Mammary epithelial cell (primary cell): ENCODE measurements at regions of chr13 and their contacts with region 1.

Region 1: GRCh38 chr13:32310134-32310706 is 4.9 kb downstream of the ZAR1L start:
- DNase-seq: peak; percentile 37
- H3K4me3 ChIP-seq: no peak overlapping the region
- H3K27ac ChIP-seq: no peak overlapping the region
- H3K4me1 ChIP-seq: peaks cover 5% of the 10 kb centered on the region
- H3K27me3 ChIP-seq: no peaks in the 10 kb centered on the region
- CTCF ChIP-seq: peak; percentile 56 to 71

Region 2: DNA sequence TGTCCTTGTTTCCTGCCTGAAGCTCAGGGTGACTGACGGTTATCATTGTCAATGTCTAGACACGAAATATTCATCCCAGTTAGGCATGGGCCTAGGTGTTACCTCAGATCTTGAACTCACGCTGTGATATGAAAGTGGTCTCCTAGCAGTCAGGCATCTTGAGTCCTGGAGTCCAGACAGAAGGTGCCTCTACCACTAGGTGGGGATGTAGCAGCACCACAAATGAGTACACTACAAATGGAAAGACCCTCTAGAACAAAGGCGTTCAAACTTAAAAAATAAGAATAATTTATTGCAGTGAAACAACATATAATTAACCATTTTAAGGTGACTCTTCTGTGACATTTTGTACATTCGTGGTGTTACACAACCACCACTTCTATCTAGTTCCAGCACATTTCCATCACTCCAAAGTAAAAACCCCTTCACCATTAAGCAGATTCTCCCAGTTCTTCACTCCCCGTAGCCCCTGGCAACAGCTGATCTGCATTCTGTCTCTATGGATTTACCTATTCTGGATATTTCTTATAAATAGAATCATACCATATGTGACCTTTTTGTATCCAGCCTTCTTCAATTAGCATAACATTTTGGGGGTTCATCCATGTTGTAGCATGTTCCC is 290.5 kb before region 1 on chr13:
- CTCF ChIA-PET with region 1: no interaction called
- dilution Hi-C with region 1: no loop called
- in situ Hi-C with region 1: loop called (anchors 10 to 25 kb)
- intact Hi-C with region 1: loop called (anchors 1 kb)
- DNase-seq: peak; percentile 30
- H3K4me3 ChIP-seq: no peak overlapping the region
- H3K27ac ChIP-seq: no peak overlapping the region
- H3K4me1 ChIP-seq: no peaks in the 10 kb centered on the region
- H3K27me3 ChIP-seq: no peaks in the 10 kb centered on the region
- CTCF ChIP-seq: peak; percentile 47 to 79

Region 3: GRCh38 chr13:32031025-32031814 is 279.0 kb before region 1 on chr13 and contains the start of gene FRY:
- CTCF ChIA-PET with region 1: no interaction called
- dilution Hi-C with region 1: no loop called
- in situ Hi-C with region 1: loop called in 1 of 2 experiments (anchors 10 kb)
- intact Hi-C with region 1: loop called (anchors 5 kb)
- DNase-seq: peak; percentile 70
- H3K4me3 ChIP-seq: peak within 1 kb of the TSS; percentile 61 to 68 (median 63)
- H3K27ac ChIP-seq: no peak within 1 kb of the TSS
- H3K4me1 ChIP-seq: peaks cover 9% of the 10 kb centered on the region
- H3K27me3 ChIP-seq: no peaks in the 10 kb centered on the region
- CTCF ChIP-seq: peak in 1 of 2 donors; percentile 16
- total RNA-seq, gene FRY: 5.8 to 23.0 TPM

Region 4: GRCh38 chr13:32246468-32246867 is 63.8 kb before region 1 on chr13:
- CTCF ChIA-PET with region 1: no interaction called
- dilution Hi-C with region 1: no loop called
- in situ Hi-C with region 1: loop called in 1 of 2 experiments (anchors 5 kb)
- intact Hi-C with region 1: loop called (anchors 1 kb)
- DNase-seq: peak; percentile 61
- H3K4me3 ChIP-seq: no peak overlapping the region
- H3K27ac ChIP-seq: no peak overlapping the region
- H3K4me1 ChIP-seq: no peaks in the 10 kb centered on the region
- H3K27me3 ChIP-seq: no peaks in the 10 kb centered on the region
- CTCF ChIP-seq: peak; percentile 87 to 90

Region 5: DNA sequence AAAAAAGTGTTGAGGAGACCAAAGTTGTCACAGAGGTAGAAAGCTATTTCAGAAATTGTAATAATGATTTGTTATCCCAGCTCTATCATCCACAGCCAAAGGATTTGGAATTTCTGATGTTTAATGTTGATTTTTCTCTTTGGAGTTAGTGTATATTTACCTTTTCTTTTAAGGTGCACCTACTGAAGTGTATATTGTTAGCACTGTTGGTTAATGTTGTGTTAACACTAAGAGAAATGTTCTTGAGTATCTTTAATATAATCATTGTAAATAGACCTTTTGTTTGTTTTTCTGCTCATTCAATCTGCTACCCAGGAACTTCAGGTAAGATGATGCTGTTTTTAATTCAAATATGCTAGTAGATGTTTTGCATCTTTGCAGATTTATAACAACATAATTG is 52.6 kb before region 1 on chr13:
- CTCF ChIA-PET with region 1: no interaction called
- dilution Hi-C with region 1: no loop called
- in situ Hi-C with region 1: no loop called
- intact Hi-C with region 1: no loop called
- DNase-seq: no peak
- H3K4me3 ChIP-seq: no peak overlapping the region
- H3K27ac ChIP-seq: no peak overlapping the region
- H3K4me1 ChIP-seq: peaks cover 38% of the 10 kb centered on the region
- H3K27me3 ChIP-seq: no peaks in the 10 kb centered on the region
- CTCF ChIP-seq: no peak

Region 6: DNA sequence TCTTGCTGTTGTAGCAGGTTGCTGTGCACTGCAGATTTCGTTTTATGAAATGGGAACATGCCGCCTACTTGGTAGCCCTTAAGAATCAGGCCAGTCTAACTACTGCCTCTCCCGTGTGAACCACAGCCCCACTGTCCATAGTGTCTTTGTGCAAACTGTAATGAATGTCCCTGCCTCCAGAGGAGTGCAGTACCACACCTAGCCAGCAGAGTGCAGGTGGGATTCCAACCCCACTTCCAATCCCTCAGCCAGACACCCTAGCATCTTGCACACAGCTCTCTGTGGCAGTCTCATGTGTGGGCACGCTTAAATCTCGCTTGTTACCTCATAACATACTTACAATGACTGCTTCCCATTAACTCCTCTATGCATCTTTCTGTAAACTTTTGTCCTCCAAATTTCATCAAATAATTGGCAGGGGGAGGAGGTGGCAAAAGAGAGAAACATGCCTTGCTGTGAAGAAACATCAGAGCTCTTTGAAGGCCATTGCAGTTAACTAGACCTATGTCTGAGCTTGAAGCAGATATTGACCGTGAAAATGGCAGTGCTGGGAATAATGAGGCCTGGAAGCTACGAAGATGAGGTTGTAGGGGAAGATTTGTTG is 42.3 kb before region 1 on chr13:
- CTCF ChIA-PET with region 1: interaction called, 3 read pairs
- dilution Hi-C with region 1: no loop called
- in situ Hi-C with region 1: no loop called
- intact Hi-C with region 1: loop called (anchors 1 kb)
- DNase-seq: peak; percentile 58
- H3K4me3 ChIP-seq: no peak overlapping the region
- H3K27ac ChIP-seq: no peak overlapping the region
- H3K4me1 ChIP-seq: peaks cover 6% of the 10 kb centered on the region
- H3K27me3 ChIP-seq: no peaks in the 10 kb centered on the region
- CTCF ChIP-seq: peak; percentile 91 to 99

Region 7: GRCh38 chr13:32472194-32472621 is 162.0 kb after region 1 on chr13:
- CTCF ChIA-PET with region 1: no interaction called
- dilution Hi-C with region 1: no loop called
- in situ Hi-C with region 1: no loop called
- intact Hi-C with region 1: no loop called
- DNase-seq: no peak
- H3K4me3 ChIP-seq: no peak overlapping the region
- H3K27ac ChIP-seq: no peak overlapping the region
- H3K4me1 ChIP-seq: no peaks in the 10 kb centered on the region
- H3K27me3 ChIP-seq: no peaks in the 10 kb centered on the region
- CTCF ChIP-seq: no peak